Breast epithelium (tissue), 4 donors: ENCODE measurements at regions of chr6 and their contacts with region 1.

Region 1: GRCh38 chr6:659716-660581 is 3.0 kb upstream of the HUS1B start:
- DNase-seq: no peak
- H3K4me3 ChIP-seq: no peak overlapping the region
- H3K27ac ChIP-seq: no peak overlapping the region
- H3K4me1 ChIP-seq: no peaks in the 10 kb centered on the region
- H3K27me3 ChIP-seq: no peaks in the 10 kb centered on the region
- CTCF ChIP-seq: no peak
- POLR2A ChIP-seq: no peak

Region 2: DNA sequence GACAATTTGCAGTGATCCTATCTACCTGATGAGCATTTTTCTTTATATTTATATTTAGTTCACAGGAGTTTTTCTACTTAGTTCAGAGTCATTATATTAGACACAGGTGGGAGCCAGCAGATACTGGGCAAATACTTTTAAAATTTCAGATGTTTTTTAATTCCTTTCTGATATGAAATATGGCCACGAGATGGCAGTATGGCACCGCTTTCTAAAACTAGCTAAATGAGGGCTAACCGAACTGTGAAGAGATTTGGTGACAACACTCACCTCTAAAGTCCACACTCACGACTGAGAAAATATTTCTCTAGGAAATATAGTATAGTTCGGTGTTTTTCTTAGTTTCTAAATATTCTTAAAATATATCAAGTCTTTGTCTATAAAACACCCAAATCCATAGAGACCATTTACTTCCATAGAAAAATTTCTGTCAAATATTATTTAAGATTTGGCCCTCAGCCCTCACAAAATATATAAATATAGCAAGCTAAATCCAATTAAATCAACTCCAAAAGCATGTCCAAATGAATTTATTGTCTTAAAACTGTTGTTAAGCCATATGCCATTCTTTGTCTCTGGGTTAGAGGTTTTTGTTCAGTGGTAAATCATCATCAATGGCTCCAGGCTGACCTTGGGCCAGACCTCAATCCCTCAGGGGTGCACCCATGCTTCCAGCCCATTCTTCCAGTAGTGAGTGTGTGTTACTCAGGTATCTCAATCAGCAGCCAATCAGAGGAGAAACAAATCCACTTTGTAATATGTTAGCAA is 66.6 kb before region 1 on chr6:
- intact Hi-C with region 1: no loop called
- DNase-seq: no peak
- H3K4me3 ChIP-seq: no peak overlapping the region
- H3K27ac ChIP-seq: no peak overlapping the region
- H3K4me1 ChIP-seq: no peaks in the 10 kb centered on the region
- H3K27me3 ChIP-seq: no peaks in the 10 kb centered on the region
- CTCF ChIP-seq: peak in 2 of 3 donors; percentile 46 to 73
- POLR2A ChIP-seq: no peak

Region 3: DNA sequence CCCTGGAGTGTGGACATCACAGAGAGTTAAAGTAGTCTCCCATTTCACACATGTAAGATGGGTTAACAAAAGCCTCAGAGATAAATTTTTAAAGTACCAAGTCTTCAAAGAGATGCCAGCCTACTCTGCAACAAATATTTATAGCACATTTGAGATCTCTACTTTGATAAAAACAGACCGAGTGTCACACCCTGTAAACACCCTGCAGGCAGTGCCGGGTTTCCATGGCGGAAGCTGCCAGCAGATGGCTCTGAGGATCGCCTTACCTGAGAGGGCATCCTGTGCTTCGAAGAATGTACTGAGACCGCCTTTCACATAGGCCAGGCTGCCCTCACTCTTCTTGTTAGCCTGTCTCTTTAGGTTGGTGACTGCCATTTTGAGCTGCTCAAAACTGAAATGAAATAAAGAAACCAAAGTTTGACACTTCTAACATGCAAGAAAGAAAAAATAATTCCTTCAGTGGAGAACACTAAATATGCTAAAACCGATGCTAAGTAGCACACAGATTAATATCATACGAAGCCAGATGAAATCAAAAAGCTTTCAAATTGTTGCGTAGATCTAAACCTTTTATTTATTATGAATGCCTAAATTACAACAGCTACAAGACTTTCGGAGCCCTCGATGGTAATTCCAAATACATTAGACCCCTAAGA is 42.4 kb before region 1 on chr6:
- intact Hi-C with region 1: no loop called
- DNase-seq: peak; percentile 23 to 81
- H3K4me3 ChIP-seq: no peak overlapping the region
- H3K27ac ChIP-seq: no peak overlapping the region
- H3K4me1 ChIP-seq: no peaks in the 10 kb centered on the region
- H3K27me3 ChIP-seq: no peaks in the 10 kb centered on the region
- CTCF ChIP-seq: peak in 1 of 3 donors; percentile 37
- POLR2A ChIP-seq: no peak

Region 4: GRCh38 chr6:1575210-1576041 is 915.5 kb after region 1 on chr6:
- intact Hi-C with region 1: no loop called
- DNase-seq: peak in 1 of 2 donors; percentile 69
- H3K4me3 ChIP-seq: peak overlapping the region; percentile 12 to 61 (median 34)
- H3K27ac ChIP-seq: peak overlapping the region; percentile 92 to 96
- H3K4me1 ChIP-seq: peaks cover 0 to 32% of the 10 kb centered on the region in 2 donors
- H3K27me3 ChIP-seq: no peaks in the 10 kb centered on the region
- CTCF ChIP-seq: no peak
- POLR2A ChIP-seq: no peak

Region 5: DNA sequence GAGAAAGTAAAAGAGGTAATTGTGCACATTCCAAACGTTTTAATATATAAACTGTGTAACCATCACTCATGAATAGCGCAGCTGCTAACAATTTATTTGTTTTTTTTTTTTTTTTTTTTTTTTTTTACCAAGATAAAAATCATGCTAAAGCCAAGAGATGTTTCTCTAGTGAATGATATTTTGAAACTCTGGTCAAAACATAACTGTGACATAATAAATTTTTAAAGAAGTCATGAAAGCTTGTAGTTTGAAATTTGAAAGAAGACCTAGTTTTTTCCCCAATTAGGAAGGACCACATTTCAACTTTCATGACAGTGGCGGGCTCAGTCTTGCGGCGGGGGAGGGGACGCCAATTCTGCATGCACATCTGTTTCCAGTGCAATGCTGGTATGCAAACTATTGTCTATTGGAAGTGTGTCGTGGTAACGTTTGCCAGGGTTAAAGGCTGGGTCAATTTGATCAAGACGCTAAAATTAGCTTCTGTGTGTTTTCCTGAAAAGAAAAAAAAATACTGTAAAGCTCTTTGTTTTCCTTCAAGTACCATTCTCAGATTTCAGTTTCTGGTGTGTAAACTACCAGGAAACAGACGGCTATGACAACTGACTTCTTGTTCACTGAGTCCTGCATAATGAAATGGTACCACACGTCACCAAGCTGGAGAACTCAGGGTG is 1161.7 kb after region 1 on chr6:
- intact Hi-C with region 1: no loop called
- DNase-seq: no peak
- H3K4me3 ChIP-seq: peak overlapping the region; percentile 15 to 52 (median 18)
- H3K27ac ChIP-seq: peak overlapping the region in 1 of 2 donors; percentile 44
- H3K4me1 ChIP-seq: no peaks in the 10 kb centered on the region
- H3K27me3 ChIP-seq: no peaks in the 10 kb centered on the region
- CTCF ChIP-seq: no peak
- POLR2A ChIP-seq: no peak

Region 6: GRCh38 chr6:2596222-2596621 is 1936.3 kb after region 1 on chr6:
- intact Hi-C with region 1: loop called (anchors 5 kb)
- DNase-seq: no peak
- H3K4me3 ChIP-seq: no peak overlapping the region
- H3K27ac ChIP-seq: no peak overlapping the region
- H3K4me1 ChIP-seq: no peaks in the 10 kb centered on the region
- H3K27me3 ChIP-seq: no peaks in the 10 kb centered on the region
- CTCF ChIP-seq: no peak
- POLR2A ChIP-seq: no peak